ENCODE measurements at regions of chr6 and their contacts with region 1.

Region 1: DNA sequence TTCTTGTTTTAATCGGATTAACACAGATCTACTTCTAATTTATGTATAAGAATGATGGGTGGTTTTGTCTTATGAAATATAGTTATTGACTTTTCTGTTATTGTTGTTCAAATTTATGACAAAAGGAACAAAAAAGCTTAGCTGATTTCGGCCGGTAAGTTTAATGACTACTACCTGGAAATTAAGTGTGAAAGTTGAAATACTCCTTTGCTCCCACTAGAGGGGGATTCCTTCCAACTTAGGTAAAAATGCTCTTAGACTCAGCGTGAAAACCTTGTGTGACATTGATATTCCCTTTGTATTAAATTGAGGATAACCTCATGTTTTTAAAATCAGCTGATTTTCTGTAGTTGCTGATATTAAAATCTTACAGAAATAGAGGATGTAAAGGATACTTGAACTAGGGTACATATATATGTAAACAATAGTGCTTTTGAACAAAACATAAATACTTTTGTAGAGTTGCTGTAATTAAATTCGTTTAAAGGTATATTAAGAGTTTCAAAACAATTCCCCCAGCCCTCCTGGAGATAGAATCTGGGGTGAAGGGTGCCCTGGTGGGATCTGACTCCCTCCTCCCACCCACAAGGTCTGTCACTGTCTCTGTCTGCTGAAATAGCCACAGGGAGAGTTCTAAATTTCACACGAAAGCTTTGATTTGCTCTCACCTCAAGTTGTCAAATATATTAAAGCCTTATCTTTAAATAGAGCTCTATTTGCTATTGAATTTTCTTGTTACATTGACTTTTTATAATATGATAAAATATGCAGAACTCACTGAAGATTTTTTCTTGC is 257.5 kb downstream of the ARID1B start:
- DNase-seq: no peak
- H3K4me3 ChIP-seq: no peak overlapping the region
- H3K27ac ChIP-seq: peak overlapping the region in 1 of 2 donors; percentile 38
- H3K4me1 ChIP-seq: peaks cover 0 to 57% (median 34%) of the 10 kb centered on the region in 4 donors
- H3K27me3 ChIP-seq: no peaks in the 10 kb centered on the region
- CTCF ChIP-seq: peak; percentile 58 to 72

Region 2: DNA sequence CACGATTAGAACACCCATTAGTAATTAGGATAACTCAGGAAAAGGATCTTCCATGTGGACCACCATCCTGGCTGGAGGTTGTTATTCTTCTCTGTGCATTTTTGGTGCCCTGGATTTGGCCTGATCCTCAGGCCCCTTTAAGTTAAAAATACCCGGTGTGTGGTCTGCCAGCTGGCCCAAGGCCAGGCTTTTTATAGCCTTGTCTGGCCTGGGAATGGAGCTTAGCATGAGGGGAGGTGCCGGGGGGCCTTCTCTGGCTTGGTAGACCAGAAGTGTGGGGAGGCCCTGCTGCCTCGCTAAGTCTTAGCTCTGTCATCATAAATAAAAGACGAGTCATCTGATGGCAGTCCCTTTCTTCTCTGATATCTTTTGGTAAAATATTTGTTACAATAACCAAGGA is 186.1 kb before region 1 on chr6:
- intact Hi-C with region 1: no loop called
- DNase-seq: peak in 1 of 2 donors; percentile 84
- H3K4me3 ChIP-seq: peak overlapping the region in 1 of 2 donors; percentile 21
- H3K27ac ChIP-seq: peak overlapping the region; percentile 44 to 71
- H3K4me1 ChIP-seq: peaks cover 0 to 99% (median 76%) of the 10 kb centered on the region in 4 donors
- H3K27me3 ChIP-seq: no peaks in the 10 kb centered on the region
- CTCF ChIP-seq: no peak

Region 3: GRCh38 chr6:157184202-157185020 is 149.8 kb after region 1 on chr6:
- intact Hi-C with region 1: loop called (anchors 5 kb)
- DNase-seq: peak; percentile 67 to 84
- H3K4me3 ChIP-seq: peak overlapping the region; percentile 19 to 20
- H3K27ac ChIP-seq: peak overlapping the region; percentile 27 to 31
- H3K4me1 ChIP-seq: peaks cover 0 to 23% (median 13%) of the 10 kb centered on the region in 4 donors
- H3K27me3 ChIP-seq: no peaks in the 10 kb centered on the region
- CTCF ChIP-seq: peak; percentile 93 to 97